ENCODE measurements at regions of chr22 and their contacts with region 1.

Region 1: DNA sequence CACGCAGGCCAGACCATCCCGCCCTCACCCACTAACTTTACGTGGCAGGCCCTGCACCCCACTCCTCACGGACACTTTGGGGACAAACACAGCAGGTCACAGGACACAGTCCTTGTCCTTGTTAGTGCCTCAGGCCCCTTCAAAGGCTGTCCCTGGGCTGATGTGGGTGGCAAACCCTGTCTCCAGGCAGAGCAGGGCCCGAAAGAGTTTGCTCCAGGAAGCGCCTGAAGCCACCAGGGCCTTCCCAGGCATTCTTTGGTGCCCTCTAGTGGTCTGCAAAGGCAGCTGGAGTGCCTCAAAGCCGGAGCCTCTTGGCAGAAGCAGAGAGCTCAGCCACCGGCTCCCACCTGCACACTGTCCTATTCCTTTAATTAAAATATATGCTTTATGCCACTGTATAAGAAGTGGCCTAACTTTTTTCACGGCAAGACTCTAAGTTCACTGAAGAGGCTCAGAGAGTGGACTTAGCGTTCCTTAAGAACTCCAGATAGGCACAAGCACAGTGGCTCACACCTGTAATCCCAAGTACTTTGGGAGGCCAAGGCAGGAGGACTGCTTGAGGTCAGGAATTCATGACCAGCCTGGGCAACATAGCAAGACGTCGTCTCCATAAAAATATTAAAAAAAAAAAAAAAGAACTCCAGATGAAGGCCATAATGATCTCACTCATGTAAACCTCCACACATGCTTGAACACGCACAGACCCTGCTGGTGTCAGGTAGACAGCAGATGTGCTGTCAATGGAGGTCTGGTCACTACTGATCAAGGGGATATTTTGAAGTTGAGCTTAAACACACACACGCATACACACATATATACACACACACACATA is 11.1 kb downstream of the TXN2 start:
- DNase-seq: peak; percentile 82 to 86 (median 84)
- ATAC-seq: peak; percentile 89
- H3K4me3 ChIP-seq: no peak overlapping the region
- H3K4me1 ChIP-seq: peaks cover 16% of the 10 kb centered on the region
- CTCF ChIP-seq: peak; percentile 92

Region 2: GRCh38 chr22:36301384-36301828 is 169.0 kb before region 1 on chr22:
- intact Hi-C with region 1: loop called (anchors 5 to 10 kb)
- DNase-seq: peak; percentile 79 to 86 (median 86)
- ATAC-seq: peak; percentile 80
- H3K4me3 ChIP-seq: no peak overlapping the region
- H3K4me1 ChIP-seq: no peaks in the 10 kb centered on the region
- CTCF ChIP-seq: peak; percentile 77